ENCODE measurements at regions of chr4 and their contacts with region 1.

Region 1: DNA sequence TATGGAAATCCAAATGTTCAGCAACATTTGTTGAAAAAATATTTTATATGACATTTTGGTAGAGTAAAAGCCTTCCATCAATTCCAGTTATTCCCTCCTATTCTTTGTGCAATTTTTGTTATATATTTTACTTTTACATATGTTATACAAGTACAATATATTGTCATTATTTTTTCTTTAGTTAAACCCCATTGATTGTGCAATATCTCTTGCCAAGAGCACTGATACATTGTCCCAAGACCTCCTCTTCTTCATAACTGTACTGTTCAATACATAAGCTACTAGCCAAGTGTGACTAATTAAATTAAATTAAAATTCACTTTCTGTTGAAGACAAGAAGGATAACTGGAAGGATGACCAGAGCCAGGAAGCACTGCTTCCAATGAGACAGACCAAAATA is 527.5 kb downstream of the TMA16 start:
- DNase-seq: no peak
- ATAC-seq: no peak
- H3K4me3 ChIP-seq: no peak overlapping the region
- H3K4me3 Mint-ChIP-seq: no peak overlapping the region
- H3K27ac ChIP-seq: no peak overlapping the region
- H3K27ac Mint-ChIP-seq: no peak overlapping the region
- H3K4me1 ChIP-seq: no peaks in the 10 kb centered on the region
- H3K4me1 Mint-ChIP-seq: no peaks in the 10 kb centered on the region
- H3K27me3 ChIP-seq: peaks cover 0 to 3% of the 10 kb centered on the region in 2 experiments
- H3K27me3 Mint-ChIP-seq: no peaks in the 10 kb centered on the region

Region 2: GRCh38 chr4:164039482-164039881 is 17.5 kb after region 1 on chr4:
- CTCF ChIA-PET with region 1: no interaction called
- POLR2A ChIA-PET with region 1: interaction called in 1 of 2 experiments, 10 read pairs
- DNase-seq: no peak
- ATAC-seq: no peak
- H3K4me3 ChIP-seq: no peak overlapping the region
- H3K4me3 Mint-ChIP-seq: no peak overlapping the region
- H3K27ac ChIP-seq: no peak overlapping the region
- H3K27ac Mint-ChIP-seq: no peak overlapping the region
- H3K4me1 ChIP-seq: no peaks in the 10 kb centered on the region
- H3K4me1 Mint-ChIP-seq: no peaks in the 10 kb centered on the region
- H3K27me3 ChIP-seq: no peaks in the 10 kb centered on the region
- H3K27me3 Mint-ChIP-seq: no peaks in the 10 kb centered on the region